Activated CD4-positive, alpha-beta T cell treated with anti-CD3 and anti-CD28 coated beads for 36 hours (primary cell): ENCODE measurements at regions of chr4 and their contacts with region 1.

Region 1: GRCh38 chr4:151031831-151032605 is 16.9 kb upstream of the LRBA start:
- DNase-seq: peak; percentile 41
- ATAC-seq: peak; percentile 69
- H3K4me3 Mint-ChIP-seq: peak overlapping the region; percentile 62
- H3K27ac Mint-ChIP-seq: peak overlapping the region; percentile 71
- H3K4me1 Mint-ChIP-seq: peaks cover 38% of the 10 kb centered on the region
- H3K27me3 Mint-ChIP-seq: peaks cover 3% of the 10 kb centered on the region

Region 2: DNA sequence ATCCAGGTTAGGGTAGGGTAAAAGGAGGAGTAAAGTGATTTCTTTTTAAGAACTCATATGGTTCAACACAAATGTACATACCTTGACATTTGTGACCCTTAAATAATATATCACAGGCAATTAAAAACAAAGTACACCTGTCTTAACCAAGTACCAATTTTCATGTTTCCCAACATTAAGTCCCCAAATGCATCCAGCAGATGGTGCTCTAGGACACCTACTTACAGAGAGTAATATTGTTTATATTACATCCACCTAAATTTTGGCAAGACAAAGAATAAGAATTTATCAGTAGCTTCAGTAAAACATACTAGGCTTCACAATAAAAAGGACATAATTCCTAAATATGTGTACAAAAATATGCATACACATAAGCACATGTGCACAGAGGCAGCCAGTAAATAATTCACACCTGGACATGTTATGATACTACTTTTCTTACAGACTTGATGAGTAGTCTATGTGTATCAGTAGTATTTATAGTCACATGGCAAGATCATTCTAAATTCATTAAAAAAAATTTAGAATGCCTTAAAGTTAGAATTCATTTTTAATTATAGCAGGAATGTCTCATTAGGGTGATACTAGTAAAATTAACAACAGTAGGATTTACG is 734.0 kb before region 1 on chr4:
- CTCF ChIA-PET with region 1: no interaction called
- POLR2A ChIA-PET with region 1: no interaction called
- intact Hi-C with region 1: loop called in 1 of 2 experiments (anchors 5 kb)
- DNase-seq: peak; percentile 60
- ATAC-seq: no peak
- H3K4me3 Mint-ChIP-seq: no peak overlapping the region
- H3K27ac Mint-ChIP-seq: no peak overlapping the region
- H3K4me1 Mint-ChIP-seq: peaks cover 15% of the 10 kb centered on the region
- H3K27me3 Mint-ChIP-seq: no peaks in the 10 kb centered on the region

Region 3: GRCh38 chr4:150436598-150437370 is 595.2 kb before region 1 on chr4:
- CTCF ChIA-PET with region 1: no interaction called
- POLR2A ChIA-PET with region 1: no interaction called
- intact Hi-C with region 1: loop called in 1 of 2 experiments (anchors 1 kb)
- DNase-seq: peak; percentile 42
- ATAC-seq: peak; percentile 98
- H3K4me3 Mint-ChIP-seq: peak overlapping the region; percentile 16
- H3K27ac Mint-ChIP-seq: peak overlapping the region; percentile 59
- H3K4me1 Mint-ChIP-seq: peaks cover 16% of the 10 kb centered on the region
- H3K27me3 Mint-ChIP-seq: no peaks in the 10 kb centered on the region

Region 4: GRCh38 chr4:150647008-150647407 is 385.0 kb before region 1 on chr4:
- CTCF ChIA-PET with region 1: no interaction called
- POLR2A ChIA-PET with region 1: no interaction called
- intact Hi-C with region 1: no loop called
- DNase-seq: no peak
- ATAC-seq: no peak
- H3K4me3 Mint-ChIP-seq: no peak overlapping the region
- H3K27ac Mint-ChIP-seq: no peak overlapping the region
- H3K4me1 Mint-ChIP-seq: peaks cover 1% of the 10 kb centered on the region
- H3K27me3 Mint-ChIP-seq: no peaks in the 10 kb centered on the region

Region 5: GRCh38 chr4:150886599-150886998 is 145.4 kb before region 1 on chr4:
- CTCF ChIA-PET with region 1: no interaction called
- POLR2A ChIA-PET with region 1: no interaction called
- intact Hi-C with region 1: loop called in 1 of 2 experiments (anchors 1 kb)
- DNase-seq: no peak
- ATAC-seq: no peak
- H3K4me3 Mint-ChIP-seq: no peak overlapping the region
- H3K27ac Mint-ChIP-seq: no peak overlapping the region
- H3K4me1 Mint-ChIP-seq: peaks cover 31% of the 10 kb centered on the region
- H3K27me3 Mint-ChIP-seq: no peaks in the 10 kb centered on the region

Region 6: DNA sequence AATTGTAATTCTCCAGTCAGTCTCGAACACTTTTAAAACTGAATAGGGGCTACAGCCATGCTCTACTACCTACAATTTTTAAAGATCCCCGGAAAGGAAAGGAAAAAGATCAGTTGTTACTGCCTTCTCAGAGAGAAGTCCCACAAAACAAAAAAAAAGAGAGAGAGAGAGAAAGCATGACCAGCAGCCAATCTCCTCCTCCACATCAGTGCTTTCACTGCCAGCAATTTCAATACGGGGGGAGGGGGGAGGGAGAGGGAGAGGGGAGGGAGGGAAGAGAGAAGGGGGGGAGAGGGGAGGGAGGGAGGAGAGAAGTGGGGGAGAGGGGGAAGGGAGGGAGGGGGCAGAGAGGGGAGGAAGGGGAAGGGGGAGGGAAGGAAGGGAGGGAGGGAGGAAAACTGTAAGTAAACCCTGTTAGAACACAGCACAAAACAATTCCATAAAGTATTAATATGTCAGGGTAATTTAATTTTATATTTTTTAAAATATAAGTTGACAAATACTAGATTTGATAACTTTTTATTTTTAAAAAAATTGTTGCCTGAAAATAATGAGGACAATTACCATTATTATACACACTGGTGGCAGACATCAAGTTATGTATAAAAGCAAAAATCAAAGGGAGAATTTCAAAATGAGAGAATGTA is 124.9 kb before region 1 on chr4:
- CTCF ChIA-PET with region 1: no interaction called
- POLR2A ChIA-PET with region 1: no interaction called
- intact Hi-C with region 1: no loop called
- DNase-seq: no peak
- ATAC-seq: no peak
- H3K4me3 Mint-ChIP-seq: no peak overlapping the region
- H3K27ac Mint-ChIP-seq: no peak overlapping the region
- H3K4me1 Mint-ChIP-seq: peaks cover 22% of the 10 kb centered on the region
- H3K27me3 Mint-ChIP-seq: no peaks in the 10 kb centered on the region

Region 7: DNA sequence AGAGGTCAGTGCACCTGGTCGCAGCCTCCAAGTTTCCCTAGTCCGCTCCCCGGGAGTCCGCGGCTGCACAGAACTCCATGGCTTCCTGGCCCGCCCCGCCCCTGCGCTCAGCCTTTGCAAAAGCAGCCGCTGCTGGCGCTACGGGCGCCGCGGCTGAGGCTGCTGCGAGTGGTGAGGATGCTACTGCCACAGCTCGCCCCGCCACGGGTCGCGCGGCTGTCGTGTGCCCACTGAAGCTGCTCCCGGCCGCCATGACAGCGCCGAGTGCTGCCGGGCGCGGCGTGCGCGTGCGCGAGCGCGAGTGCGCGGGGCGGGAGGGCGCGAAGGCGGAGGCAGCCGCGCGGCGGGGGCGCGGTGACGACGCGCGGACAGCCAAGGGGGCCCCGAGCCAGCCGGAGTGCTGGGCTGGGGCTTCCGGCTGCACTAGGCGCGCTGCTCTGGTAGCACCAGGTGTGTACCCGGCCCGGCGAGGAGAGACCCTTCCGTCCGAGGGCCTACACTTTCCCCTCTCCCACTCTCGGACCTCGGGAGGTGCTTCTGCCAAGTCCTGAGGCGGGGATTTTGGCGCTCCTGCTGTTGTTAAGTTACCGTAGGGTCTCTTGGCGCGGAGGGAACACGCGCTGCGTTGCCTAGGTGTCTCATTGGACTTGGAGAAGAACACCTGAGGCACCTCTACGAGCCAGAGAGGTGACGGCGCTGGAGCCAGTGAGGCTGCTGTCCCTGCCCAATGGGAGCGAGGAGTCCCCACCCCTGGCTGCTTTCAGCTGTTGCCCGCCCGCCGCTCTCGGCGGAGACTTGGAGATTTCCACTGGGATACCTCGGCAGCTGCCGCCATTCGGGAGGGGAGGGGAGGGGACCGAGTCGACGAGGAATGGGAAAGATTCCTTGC is 16.3 kb before region 1 on chr4:
- CTCF ChIA-PET with region 1: interaction called, 4 read pairs
- POLR2A ChIA-PET with region 1: interaction called, 19 read pairs
- intact Hi-C with region 1: loop called (anchors 1 kb)
- DNase-seq: peak; percentile 89
- ATAC-seq: peak; percentile 81
- H3K4me3 Mint-ChIP-seq: peak overlapping the region; percentile 90
- H3K27ac Mint-ChIP-seq: peak overlapping the region; percentile 99
- H3K4me1 Mint-ChIP-seq: peaks cover 24% of the 10 kb centered on the region
- H3K27me3 Mint-ChIP-seq: no peaks in the 10 kb centered on the region